ENCODE measurements at regions of chr16 and their contacts with region 1.

Region 1: GRCh38 chr16:50065624-50066481 is at the start of gene HEATR3:
- DNase-seq: peak; percentile 95
- H3K4me3 ChIP-seq: peak within 1 kb of the TSS; percentile 73
- H3K27ac ChIP-seq: peak within 1 kb of the TSS; percentile 94
- H3K4me1 ChIP-seq: peaks cover 5% of the 10 kb centered on the region
- H3K27me3 ChIP-seq: no peaks in the 10 kb centered on the region
- CTCF ChIP-seq: no peak
- total RNA-seq, gene HEATR3: 18.1 to 26.9 TPM

Region 2: GRCh38 chr16:49986351-49987124 is 79.3 kb before region 1 on chr16:
- intact Hi-C with region 1: no loop called
- DNase-seq: no peak
- H3K4me3 ChIP-seq: no peak overlapping the region
- H3K27ac ChIP-seq: no peak overlapping the region
- H3K4me1 ChIP-seq: no peaks in the 10 kb centered on the region
- H3K27me3 ChIP-seq: no peaks in the 10 kb centered on the region
- CTCF ChIP-seq: no peak

Region 3: GRCh38 chr16:50011707-50012106 is 54.1 kb before region 1 on chr16:
- intact Hi-C with region 1: no loop called
- DNase-seq: no peak
- H3K4me3 ChIP-seq: no peak overlapping the region
- H3K27ac ChIP-seq: no peak overlapping the region
- H3K4me1 ChIP-seq: no peaks in the 10 kb centered on the region
- H3K27me3 ChIP-seq: no peaks in the 10 kb centered on the region
- CTCF ChIP-seq: no peak

Region 4: GRCh38 chr16:50152807-50153452 is 87.1 kb after region 1 on chr16 and contains the start of gene TENT4B:
- intact Hi-C with region 1: loop called (anchors 5 kb)
- DNase-seq: peak; percentile 92
- H3K4me3 ChIP-seq: peak within 1 kb of the TSS; percentile 88
- H3K27ac ChIP-seq: peak within 1 kb of the TSS; percentile 89
- H3K4me1 ChIP-seq: no peaks in the 10 kb centered on the region
- H3K27me3 ChIP-seq: no peaks in the 10 kb centered on the region
- CTCF ChIP-seq: no peak
- total RNA-seq, gene TENT4B: 13.5 to 15.6 TPM

Region 5: DNA sequence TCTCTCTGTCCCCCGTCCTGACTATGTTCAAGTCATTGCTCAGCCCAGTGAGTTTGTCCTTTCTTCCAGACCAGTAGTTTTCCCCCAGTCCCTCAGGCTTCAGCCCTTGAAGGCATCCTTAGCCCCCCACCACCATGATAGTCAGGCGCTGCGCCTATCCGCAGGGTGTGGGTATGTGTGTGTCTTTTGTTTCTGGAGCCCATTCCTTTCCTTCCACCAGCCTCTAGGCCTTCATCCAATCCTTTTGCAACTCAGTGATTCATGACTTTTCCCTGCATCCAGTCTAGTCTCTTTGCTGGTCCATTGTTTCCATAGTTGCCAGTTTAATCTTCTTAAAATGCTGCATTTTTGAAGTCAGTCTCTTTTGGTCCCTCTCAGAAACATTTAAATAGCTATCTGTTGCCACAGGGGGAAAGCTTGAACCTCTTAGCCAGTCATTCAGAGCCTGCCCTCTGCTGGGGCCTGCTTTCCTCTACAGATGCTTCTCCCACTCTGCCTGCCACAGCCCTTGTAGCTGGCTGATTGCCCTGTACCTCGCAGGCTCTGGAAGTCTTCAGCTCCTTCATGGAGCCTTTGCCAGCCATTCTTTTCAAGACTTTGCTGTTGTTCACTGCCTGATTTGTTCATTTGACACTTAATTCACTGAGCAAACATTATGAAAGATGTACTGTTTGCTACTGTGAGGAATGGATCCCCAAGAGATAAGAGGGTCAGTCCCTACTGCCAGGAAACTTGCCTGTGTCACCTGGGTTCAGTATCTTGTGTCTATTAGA is 144.6 kb after region 1 on chr16:
- intact Hi-C with region 1: loop called (anchors 5 kb)
- DNase-seq: peak; percentile 76
- H3K4me3 ChIP-seq: no peak overlapping the region
- H3K27ac ChIP-seq: peak overlapping the region; percentile 46
- H3K4me1 ChIP-seq: peaks cover 20% of the 10 kb centered on the region
- H3K27me3 ChIP-seq: no peaks in the 10 kb centered on the region
- CTCF ChIP-seq: peak; percentile 66

Measured in colonic mucosa (tissue), 4 donors.